ENCODE measurements at regions of chr7 and their contacts with region 1.

Region 1: DNA sequence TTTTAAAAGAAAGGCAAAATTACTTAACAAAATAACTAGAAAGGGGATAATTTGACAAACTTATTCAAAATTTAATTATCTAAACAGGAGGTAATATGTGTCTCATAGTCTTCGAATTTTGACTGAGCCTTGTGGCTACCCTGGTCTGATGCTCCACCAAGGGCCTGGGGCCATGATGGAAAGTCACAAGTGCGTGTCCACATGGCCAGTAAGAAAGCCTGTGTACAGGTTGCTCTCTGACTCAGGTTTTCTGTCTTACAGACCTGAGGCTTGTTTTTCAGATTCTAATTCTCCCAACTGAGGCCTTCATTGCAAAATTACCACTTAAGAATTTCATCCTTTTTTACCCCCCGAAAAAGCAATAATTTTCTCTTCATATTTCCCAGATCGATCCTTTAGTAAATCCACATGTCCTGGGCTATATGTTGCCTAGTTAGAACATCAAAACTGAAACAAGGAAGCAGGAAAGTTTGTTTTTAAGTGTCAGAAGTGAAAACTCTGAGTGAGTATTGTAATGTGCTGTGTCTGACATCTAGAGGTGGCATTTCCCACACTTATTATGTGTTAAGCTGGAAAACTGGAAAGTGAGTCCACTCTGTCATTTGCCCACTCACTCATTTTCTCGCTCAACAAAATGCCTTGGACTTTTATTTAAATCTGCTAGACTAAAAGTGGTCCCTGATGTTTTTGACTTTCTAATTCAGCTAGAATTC is 10.0 kb downstream of the CYP3A43 start:
- DNase-seq: no peak
- H3K4me3 ChIP-seq: no peak overlapping the region
- H3K27me3 ChIP-seq: peaks cover 7% of the 10 kb centered on the region
- CTCF ChIP-seq: no peak

Region 2: GRCh38 chr7:99597762-99598501 is 239.9 kb before region 1 on chr7 and contains the start of gene TMEM225B:
- CTCF ChIA-PET with region 1: no interaction called
- POLR2A ChIA-PET with region 1: interaction called, 11 read pairs
- DNase-seq: no peak
- H3K4me3 ChIP-seq: no peak within 1 kb of the TSS
- H3K27me3 ChIP-seq: no peaks in the 10 kb centered on the region
- CTCF ChIP-seq: no peak
- polyA plus RNA-seq, gene TMEM225B: 1.2 and 1.3 TPM in 2 replicates

Region 3: DNA sequence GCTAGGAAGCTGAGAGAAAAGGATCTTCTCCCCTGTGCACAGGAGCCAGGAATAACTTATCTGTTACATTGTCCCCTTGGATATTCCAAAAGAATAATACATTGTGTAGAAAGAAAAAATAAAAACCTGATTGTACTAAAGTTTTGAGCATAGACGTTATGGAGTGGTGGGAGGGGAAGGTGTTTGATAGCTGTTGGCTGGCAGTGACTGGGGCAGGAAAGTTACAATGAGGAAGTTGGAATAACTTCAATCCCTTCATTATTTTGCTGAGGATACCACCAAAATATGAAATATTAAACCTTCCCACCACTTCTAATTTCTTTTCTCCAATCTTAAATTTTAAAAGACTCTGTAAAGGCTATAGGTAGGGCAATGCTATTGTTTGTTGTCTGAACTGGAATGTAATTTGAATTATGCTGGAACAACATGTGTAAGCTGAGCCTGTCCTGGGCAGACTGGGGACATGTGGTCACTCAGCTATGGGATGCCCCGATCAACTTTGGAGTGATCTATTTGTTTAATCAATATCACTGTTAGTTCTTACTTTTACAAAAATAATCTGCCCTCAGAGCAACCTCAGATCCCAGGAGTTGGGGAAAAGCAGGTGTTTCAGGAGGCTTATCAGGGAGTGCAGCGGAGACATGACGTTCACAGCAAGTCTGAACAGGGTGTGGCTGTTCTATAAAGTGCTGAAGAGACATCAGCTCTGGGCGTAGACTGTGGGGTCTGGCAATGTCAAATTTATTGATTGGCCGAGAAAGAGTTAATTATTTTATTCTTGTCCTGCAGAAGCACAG is 10.8 kb after region 1 on chr7:
- CTCF ChIA-PET with region 1: no interaction called
- POLR2A ChIA-PET with region 1: no interaction called
- DNase-seq: no peak
- H3K4me3 ChIP-seq: no peak overlapping the region
- H3K27me3 ChIP-seq: no peaks in the 10 kb centered on the region; the same call in 1 of the 2 replicates
- CTCF ChIP-seq: no peak